BJ (cell line): ENCODE measurements at regions of chr5 and their contacts with region 1.

Region 1: GRCh38 chr5:97062046-97062445 is 80.4 kb downstream of the LIX1 start:
- DNase-seq: no peak
- H3K4me3 ChIP-seq: no peak overlapping the region
- H3K27me3 ChIP-seq: peaks cover 1% of the 10 kb centered on the region; the same call in 1 of the 2 replicates
- CTCF ChIP-seq: no peak

Region 2: DNA sequence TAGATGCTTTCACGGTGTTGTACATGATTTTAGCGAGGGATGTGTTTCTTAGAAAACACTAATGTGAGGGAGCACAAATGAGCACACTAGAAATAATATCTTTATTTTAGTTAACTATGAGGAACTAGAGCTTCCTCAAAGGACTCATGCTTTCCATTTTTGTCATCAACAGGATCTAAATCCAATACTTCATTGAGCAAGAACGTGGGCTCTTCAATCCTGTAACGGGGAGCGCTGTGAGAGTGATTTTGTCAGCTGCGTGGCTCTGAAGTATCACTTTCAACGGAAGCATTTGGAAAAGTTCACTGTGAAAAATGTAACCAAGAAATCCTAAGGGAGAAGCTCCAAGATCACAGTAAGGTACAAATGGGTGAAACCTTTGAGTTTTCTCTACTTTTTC is 12.9 kb before region 1 on chr5:
- CTCF ChIA-PET with region 1: interaction called, 14 read pairs
- POLR2A ChIA-PET with region 1: no interaction called
- DNase-seq: no peak
- H3K4me3 ChIP-seq: no peak overlapping the region
- H3K27me3 ChIP-seq: no peaks in the 10 kb centered on the region; the same call in 1 of the 2 replicates
- CTCF ChIP-seq: no peak

Region 3: DNA sequence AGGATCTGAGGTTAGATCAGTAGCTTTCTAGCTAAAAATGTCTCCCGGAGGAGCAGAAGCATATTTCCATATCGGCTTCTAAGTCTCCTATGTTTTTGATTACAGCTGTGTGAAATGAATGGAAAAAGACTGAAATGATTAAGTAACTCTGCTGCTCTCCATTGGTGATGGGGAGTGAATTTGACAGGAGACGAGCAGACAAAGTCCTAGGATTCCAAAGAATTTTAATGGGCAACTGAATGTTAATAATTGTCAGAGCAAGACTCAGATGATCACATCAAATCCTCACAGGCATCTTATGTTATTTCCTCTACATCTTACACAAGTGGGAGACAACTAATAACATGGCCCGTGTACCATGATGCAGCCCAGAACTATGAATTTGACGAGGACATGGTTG is 13.6 kb after region 1 on chr5:
- CTCF ChIA-PET with region 1: no interaction called
- POLR2A ChIA-PET with region 1: no interaction called
- DNase-seq: no peak
- H3K4me3 ChIP-seq: no peak overlapping the region
- H3K27me3 ChIP-seq: no peaks in the 10 kb centered on the region
- CTCF ChIP-seq: no peak